ENCODE measurements at regions of chrX and their contacts with region 1.

Region 1: GRCh38 chrX:9341291-9342201 is 123.3 kb upstream of the TBL1X start:
- DNase-seq: peak; percentile 30
- H3K4me3 Mint-ChIP-seq: peak overlapping the region; percentile 73
- H3K27ac Mint-ChIP-seq: peak overlapping the region; percentile 90
- H3K4me1 Mint-ChIP-seq: peaks cover 36% of the 10 kb centered on the region
- H3K27me3 Mint-ChIP-seq: peaks cover 2% of the 10 kb centered on the region

Region 2: DNA sequence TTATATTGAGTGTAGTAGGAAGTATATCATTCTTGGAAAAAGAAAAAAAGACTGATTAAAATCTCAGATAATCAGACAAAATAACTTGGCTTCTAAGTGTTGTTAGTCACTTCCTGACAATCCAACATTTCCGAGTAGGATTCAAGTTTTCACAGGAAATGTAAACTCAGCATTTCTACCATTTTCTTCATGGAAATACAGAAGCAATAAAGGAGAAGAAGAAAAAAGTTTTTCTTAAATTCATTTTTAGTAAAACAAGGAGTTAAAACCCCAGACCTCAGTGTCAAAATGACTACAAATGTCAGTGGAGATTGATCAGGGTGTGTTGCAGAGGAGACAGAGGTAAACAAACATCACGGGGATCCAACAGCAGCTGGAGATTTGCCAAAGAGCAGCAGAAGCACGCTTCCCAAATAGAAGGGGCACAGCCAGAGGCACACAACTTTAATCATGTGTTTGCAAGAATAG is 178.3 kb before region 1 on chrX:
- intact Hi-C with region 1: loop called (anchors 5 kb)
- DNase-seq: no peak
- H3K4me3 Mint-ChIP-seq: no peak overlapping the region
- H3K27ac Mint-ChIP-seq: no peak overlapping the region
- H3K4me1 Mint-ChIP-seq: peaks cover 25% of the 10 kb centered on the region
- H3K27me3 Mint-ChIP-seq: no peaks in the 10 kb centered on the region

Region 3: DNA sequence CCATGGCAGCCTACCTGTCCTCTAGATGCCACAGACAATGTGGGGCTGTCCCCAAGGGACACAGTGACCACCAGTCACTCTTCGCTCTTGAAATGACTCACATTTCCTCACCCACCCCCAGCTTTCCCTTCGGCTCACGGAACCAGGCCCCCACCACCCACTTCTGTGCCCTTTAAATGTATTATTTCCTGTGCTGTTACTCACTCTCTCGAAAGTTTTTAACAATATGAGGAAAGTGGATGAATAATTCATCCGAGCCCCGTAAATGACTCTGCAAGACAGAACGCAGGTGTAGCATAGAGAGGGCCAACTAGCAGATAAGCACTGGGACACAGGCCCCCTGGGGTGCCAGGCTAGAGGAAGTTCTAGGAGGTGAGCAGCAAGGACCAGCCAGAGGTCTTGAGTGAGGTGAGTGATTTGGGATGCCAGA is 56.2 kb before region 1 on chrX:
- intact Hi-C with region 1: loop called (anchors 1 kb)
- DNase-seq: peak; percentile 14
- H3K4me3 Mint-ChIP-seq: peak overlapping the region; percentile 37
- H3K27ac Mint-ChIP-seq: peak overlapping the region; percentile 94
- H3K4me1 Mint-ChIP-seq: peaks cover 38% of the 10 kb centered on the region
- H3K27me3 Mint-ChIP-seq: peaks cover 3% of the 10 kb centered on the region

Region 4: GRCh38 chrX:9352694-9353411 is 11.3 kb after region 1 on chrX:
- intact Hi-C with region 1: loop called (anchors 1 kb)
- DNase-seq: no peak
- H3K4me3 Mint-ChIP-seq: peak overlapping the region; percentile 53
- H3K27ac Mint-ChIP-seq: peak overlapping the region; percentile 77
- H3K4me1 Mint-ChIP-seq: peaks cover 35% of the 10 kb centered on the region
- H3K27me3 Mint-ChIP-seq: no peaks in the 10 kb centered on the region

Region 5: GRCh38 chrX:9464435-9465371 is 123.2 kb after region 1 on chrX and contains the start of gene TBL1X:
- intact Hi-C with region 1: loop called (anchors 1 kb)
- DNase-seq: peak; percentile 46
- H3K4me3 Mint-ChIP-seq: peak within 1 kb of the TSS; percentile 71
- H3K27ac Mint-ChIP-seq: peak within 1 kb of the TSS; percentile 88
- H3K4me1 Mint-ChIP-seq: peaks cover 43% of the 10 kb centered on the region
- H3K27me3 Mint-ChIP-seq: peaks cover 3% of the 10 kb centered on the region
- total RNA-seq, gene TBL1X: 24.0 and 29.2 TPM in 2 replicates

Measured in activated T-helper 1 cell treated with anti-CD3 and anti-CD28 coated beads, Interleukin-12 subunit alpha, Interleukin-12 subunit beta, Interleukin-2, Interleukin-4 antibody, amounts not matched to agents 30 ng/mL and 10 ng/mL and 1 ng/mL, durations not matched to agents 14 hours and 24 hours and 36 hours (primary cell).